Lower leg skin (tissue), 4 donors: ENCODE measurements at regions of chr10 and their contacts with region 1.

Region 1: DNA sequence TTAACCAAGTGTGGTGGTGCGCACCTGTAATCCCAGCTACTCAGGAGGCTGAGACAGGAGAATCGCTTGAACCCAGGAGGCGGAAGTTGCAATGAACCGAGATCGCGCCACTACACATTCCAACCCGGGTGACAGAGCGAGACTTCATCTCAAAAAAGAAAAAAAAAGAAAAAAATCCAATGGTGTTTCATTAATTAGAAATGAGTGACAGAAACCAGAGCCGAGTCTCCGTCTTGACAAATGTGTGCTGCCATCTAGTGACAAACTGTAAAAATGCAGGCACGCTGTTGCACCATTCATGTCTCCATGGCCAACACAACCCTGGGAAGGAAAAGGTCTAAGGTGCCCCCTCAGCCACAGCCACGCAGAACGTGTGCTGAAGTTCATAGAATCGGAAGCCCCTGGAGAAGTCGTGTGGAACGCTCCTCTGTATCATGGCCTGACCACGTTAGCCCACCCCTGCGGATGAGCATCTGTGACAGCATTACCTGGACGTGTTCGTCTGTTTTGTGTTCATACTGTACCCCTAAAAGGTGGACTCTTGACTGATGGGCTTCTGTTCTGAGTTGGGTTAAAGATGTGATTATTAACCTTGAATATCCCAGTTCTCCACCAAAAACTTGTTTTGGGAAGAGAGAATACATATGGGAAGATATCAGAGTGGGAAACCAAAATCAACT is 94.9 kb downstream of the LYZL2 start:
- DNase-seq: peak; percentile 83 to 93
- H3K4me3 ChIP-seq: no peak overlapping the region
- CTCF ChIP-seq: peak in 1 of 3 donors; percentile 42
- POLR2A ChIP-seq: no peak

Region 2: DNA sequence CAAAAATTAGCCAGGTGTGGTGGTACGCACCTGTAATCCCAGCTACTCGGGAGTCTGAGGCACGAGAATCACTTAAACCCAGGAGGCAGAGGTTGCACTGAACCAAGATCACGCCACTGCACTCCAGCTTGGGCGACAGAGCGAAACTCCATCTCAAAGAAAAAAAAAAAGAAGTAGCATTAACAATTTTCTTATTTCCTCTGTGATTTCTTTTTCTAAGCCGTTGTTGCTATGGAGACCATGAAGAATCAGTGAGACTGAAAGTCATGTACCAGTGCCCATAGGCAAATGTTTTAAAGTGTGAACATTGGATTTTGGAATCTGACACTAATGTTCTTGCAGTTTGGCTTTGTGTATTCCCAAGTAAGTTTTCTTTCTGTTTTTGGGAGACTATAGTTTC is 119.0 kb before region 1 on chr10:
- intact Hi-C with region 1: loop called (anchors 5 kb)
- DNase-seq: no peak
- H3K4me3 ChIP-seq: no peak overlapping the region
- CTCF ChIP-seq: no peak
- POLR2A ChIP-seq: no peak